ENCODE measurements at regions of chr1 and their contacts with region 1.

Region 1: DNA sequence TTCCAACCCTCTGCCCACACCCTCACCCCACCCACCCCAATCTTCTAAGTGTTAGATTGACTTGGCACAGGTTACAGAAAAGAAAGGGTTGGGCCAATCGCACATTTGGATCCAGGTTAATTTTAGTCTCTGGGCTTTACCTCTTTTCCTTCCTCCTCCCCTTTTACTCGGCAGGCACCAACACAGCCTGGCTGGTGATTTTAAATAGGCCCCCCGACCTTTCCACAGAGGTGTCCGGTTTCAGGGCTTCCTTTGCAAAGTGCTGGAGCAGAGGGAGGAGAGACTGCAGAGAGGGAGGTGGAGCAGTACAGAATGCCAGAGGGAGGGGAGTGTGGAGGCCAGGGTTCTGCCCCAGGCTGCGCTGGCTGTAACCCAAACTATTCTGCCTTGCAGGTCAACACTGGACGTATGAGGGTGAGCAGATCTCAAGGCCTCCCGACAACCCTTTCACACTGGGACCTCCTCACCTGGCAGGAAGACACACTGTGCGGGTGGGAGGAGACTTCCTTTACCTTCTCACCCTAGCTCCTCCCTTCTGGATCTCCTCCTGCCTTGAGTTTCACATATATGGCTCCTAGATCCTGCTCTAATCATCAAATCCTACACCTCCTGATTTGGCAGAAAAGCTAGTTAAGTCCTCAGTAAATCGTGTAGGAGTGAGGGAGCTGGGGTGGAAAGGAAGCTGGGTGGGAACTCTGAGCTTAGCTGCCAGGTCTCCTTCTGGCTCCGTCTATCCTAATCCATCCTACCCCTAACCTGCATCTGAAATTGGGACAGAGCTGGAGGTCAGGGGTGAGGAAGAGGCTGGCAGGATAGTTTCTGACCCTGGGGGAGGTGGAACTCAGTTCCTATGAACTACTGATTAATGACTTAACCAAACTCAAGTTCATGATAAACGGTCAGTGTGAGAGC is 2.4 kb downstream of the CA14 start:
- DNase-seq: no peak
- ATAC-seq: no peak
- H3K4me3 ChIP-seq: no peak overlapping the region
- H3K4me3 Mint-ChIP-seq: no peak overlapping the region
- H3K27ac ChIP-seq: no peak overlapping the region
- H3K27ac Mint-ChIP-seq: no peak overlapping the region
- H3K4me1 ChIP-seq: peaks cover 17% of the 10 kb centered on the region
- H3K4me1 Mint-ChIP-seq: peaks cover 12% of the 10 kb centered on the region
- H3K27me3 ChIP-seq: peaks cover 27 to 28% of the 10 kb centered on the region in 2 experiments
- H3K27me3 Mint-ChIP-seq: peaks cover 40% of the 10 kb centered on the region
- CTCF ChIP-seq: no peak

Region 2: DNA sequence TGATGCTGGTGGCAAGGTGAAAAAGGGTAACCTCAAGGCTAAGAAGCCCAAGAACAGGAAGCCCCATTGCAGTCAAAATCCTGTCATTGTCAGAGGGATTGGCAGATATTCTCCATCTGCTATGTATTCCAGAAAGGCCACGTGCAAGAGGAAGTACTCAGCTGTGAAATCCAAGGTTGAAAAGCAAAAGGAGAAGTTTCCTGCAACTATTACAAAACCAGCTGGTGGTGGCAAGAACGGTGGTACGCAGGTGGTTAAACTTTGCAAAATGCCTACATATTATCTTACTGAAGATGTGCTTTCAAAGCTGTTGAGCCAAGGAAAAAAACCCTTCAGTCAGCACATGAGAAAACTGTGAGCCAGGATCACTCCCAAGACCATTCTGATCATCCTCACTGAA is 206.1 kb before region 1 on chr1:
- CTCF ChIA-PET with region 1: no interaction called
- POLR2A ChIA-PET with region 1: no interaction called
- intact Hi-C with region 1: no loop called
- DNase-seq: peak in 2 of 14 experiments; percentile 24 to 29
- ATAC-seq: no peak
- H3K4me3 ChIP-seq: no peak overlapping the region
- H3K4me3 Mint-ChIP-seq: no peak overlapping the region
- H3K27ac ChIP-seq: no peak overlapping the region
- H3K27ac Mint-ChIP-seq: no peak overlapping the region
- H3K4me1 ChIP-seq: no peaks in the 10 kb centered on the region
- H3K4me1 Mint-ChIP-seq: no peaks in the 10 kb centered on the region
- H3K27me3 ChIP-seq: no peaks in the 10 kb centered on the region
- H3K27me3 Mint-ChIP-seq: no peaks in the 10 kb centered on the region
- CTCF ChIP-seq: no peak

Region 3: DNA sequence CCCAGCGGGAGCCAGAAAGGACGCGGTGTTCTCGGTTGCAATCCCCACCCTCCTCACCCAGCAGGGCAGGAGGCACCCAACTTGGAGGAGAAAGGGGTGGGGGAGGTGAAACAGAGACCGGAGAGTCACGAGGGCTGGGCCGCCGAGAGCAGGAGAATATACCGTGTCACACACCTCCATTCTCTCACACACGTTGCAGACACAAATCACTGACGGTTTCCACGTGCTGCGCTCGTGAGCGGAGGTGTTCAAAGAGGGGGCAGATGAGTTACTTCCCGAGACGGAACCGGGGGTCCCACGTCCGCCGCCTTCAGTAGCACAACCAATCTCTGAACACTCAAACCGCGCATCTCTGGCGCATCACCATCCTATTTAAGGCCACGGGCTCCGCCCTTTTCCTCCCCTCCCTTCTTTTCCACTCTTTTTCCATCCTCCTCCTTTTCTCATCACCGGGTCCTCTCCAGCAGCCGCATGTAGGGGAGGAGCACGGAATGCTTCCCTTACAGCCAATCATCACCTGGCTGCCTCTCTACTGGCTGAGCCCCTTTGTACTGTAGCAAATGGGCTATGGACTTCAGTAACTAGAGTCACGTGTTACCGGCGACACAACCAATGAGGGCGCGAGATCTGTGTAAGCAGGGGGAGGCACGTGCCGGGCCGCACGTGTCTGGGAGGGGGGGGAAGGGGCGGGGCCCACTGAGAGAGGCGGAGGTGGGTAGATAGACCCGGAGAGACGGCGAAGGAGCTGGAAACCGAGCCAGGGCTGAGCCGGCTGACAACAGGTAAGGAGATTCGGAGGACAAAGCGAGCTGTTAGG is 22.0 kb after region 1 on chr1 and contains the start of gene CIART:
- CTCF ChIA-PET with region 1: interaction called, 28 read pairs
- POLR2A ChIA-PET with region 1: interaction called, 14 read pairs
- intact Hi-C with region 1: loop called (anchors 1 kb)
- DNase-seq: peak; percentile 55 to 95 (median 74)
- ATAC-seq: peak; percentile 84
- H3K4me3 ChIP-seq: peak within 1 kb of the TSS; percentile 63
- H3K4me3 Mint-ChIP-seq: peak within 1 kb of the TSS; percentile 82
- H3K27ac ChIP-seq: peak within 1 kb of the TSS; percentile 17 to 49
- H3K27ac Mint-ChIP-seq: peak within 1 kb of the TSS; percentile 87
- H3K4me1 ChIP-seq: peaks cover 24% of the 10 kb centered on the region
- H3K4me1 Mint-ChIP-seq: peaks cover 32% of the 10 kb centered on the region
- H3K27me3 ChIP-seq: no peaks in the 10 kb centered on the region
- H3K27me3 Mint-ChIP-seq: no peaks in the 10 kb centered on the region
- CTCF ChIP-seq: no peak
- total RNA-seq, gene CIART: 4.0 to 4.5 TPM

Region 4: DNA sequence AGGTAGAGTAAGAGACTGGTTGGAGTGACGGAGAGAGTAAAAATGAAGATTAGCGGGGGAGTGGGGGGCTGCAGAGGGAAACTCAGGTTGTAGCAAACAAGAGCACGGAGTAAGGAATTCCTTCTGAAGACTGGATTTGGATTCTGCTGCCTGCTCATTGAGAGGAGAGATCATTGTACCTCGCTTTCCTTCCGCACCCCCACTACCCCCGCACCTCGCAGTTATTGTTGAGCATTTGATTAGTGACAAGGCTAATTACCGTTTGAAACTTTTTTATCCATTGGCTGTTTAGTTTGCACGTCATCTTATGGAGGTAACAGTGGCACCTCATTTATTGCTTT is 61.8 kb after region 1 on chr1:
- CTCF ChIA-PET with region 1: interaction called, 4 read pairs
- POLR2A ChIA-PET with region 1: interaction called, 3 read pairs
- intact Hi-C with region 1: loop called in 1 of 2 experiments (anchors 5 kb)
- DNase-seq: peak in 5 of 14 experiments; percentile 3 to 38 (median 28)
- ATAC-seq: peak; percentile 20
- H3K4me3 ChIP-seq: peak overlapping the region; percentile 78
- H3K4me3 Mint-ChIP-seq: peak overlapping the region; percentile 97
- H3K27ac ChIP-seq: peak overlapping the region; percentile 83 to 84
- H3K27ac Mint-ChIP-seq: peak overlapping the region; percentile 95
- H3K4me1 ChIP-seq: peaks cover 34% of the 10 kb centered on the region
- H3K4me1 Mint-ChIP-seq: peaks cover 39% of the 10 kb centered on the region
- H3K27me3 ChIP-seq: no peaks in the 10 kb centered on the region
- H3K27me3 Mint-ChIP-seq: no peaks in the 10 kb centered on the region
- CTCF ChIP-seq: no peak

Region 5: DNA sequence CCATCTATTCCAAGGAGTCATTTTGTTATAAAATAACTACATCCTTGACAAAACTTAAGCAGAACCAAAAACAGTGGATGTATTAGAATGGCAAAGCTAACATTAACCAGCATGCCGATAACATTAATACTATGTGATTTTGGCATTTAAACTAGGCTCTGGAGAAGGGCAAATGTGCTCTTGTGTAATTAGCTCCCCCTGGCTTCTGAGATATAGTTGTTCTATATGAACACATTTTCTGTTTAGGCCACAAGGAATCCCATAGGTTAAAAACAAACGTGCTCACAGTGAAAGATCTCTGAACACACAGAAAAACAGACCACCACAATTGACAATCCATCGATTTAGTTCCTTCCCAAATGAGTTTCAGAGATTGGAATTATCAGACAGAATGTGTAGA is 169.8 kb after region 1 on chr1:
- CTCF ChIA-PET with region 1: interaction called, 5 read pairs
- POLR2A ChIA-PET with region 1: no interaction called
- intact Hi-C with region 1: loop called (anchors 1 to 5 kb)
- DNase-seq: peak in 3 of 14 experiments; percentile 35 to 39 (median 36)
- ATAC-seq: peak; percentile 52
- H3K4me3 ChIP-seq: no peak overlapping the region
- H3K4me3 Mint-ChIP-seq: no peak overlapping the region
- H3K27ac ChIP-seq: no peak overlapping the region
- H3K27ac Mint-ChIP-seq: peak overlapping the region; percentile 41
- H3K4me1 ChIP-seq: no peaks in the 10 kb centered on the region
- H3K4me1 Mint-ChIP-seq: peaks cover 18% of the 10 kb centered on the region
- H3K27me3 ChIP-seq: no peaks in the 10 kb centered on the region
- H3K27me3 Mint-ChIP-seq: no peaks in the 10 kb centered on the region
- CTCF ChIP-seq: peak; percentile 54

Region 6: DNA sequence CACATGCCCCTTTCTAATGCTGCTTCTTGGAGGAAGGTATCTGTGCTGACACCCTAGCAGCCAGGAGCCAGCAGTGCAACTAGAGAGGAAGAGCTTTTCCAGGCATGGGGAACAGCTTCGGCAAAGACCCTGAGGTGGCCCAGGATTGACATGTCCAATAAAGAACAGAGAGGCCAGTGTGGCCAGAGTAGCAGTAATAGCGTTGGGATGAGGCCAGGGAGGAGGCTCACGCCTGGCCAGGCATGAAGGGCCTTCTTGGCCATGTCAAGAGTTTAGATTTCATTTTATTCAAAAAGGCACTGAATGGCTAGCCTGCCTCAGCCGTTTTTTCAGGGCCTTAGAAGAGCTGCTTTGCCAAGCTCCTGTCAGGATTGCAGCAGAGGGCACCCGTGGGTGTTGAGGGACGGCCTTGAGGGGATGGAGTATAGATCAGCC is 272.9 kb after region 1 on chr1:
- CTCF ChIA-PET with region 1: interaction called, 4 read pairs
- POLR2A ChIA-PET with region 1: no interaction called
- intact Hi-C with region 1: loop called in 1 of 2 experiments (anchors 5 kb)
- DNase-seq: no peak
- ATAC-seq: no peak
- H3K4me3 ChIP-seq: no peak overlapping the region
- H3K4me3 Mint-ChIP-seq: no peak overlapping the region
- H3K27ac ChIP-seq: no peak overlapping the region
- H3K27ac Mint-ChIP-seq: no peak overlapping the region
- H3K4me1 ChIP-seq: no peaks in the 10 kb centered on the region
- H3K4me1 Mint-ChIP-seq: no peaks in the 10 kb centered on the region
- H3K27me3 ChIP-seq: no peaks in the 10 kb centered on the region
- H3K27me3 Mint-ChIP-seq: no peaks in the 10 kb centered on the region
- CTCF ChIP-seq: no peak

Region 7: DNA sequence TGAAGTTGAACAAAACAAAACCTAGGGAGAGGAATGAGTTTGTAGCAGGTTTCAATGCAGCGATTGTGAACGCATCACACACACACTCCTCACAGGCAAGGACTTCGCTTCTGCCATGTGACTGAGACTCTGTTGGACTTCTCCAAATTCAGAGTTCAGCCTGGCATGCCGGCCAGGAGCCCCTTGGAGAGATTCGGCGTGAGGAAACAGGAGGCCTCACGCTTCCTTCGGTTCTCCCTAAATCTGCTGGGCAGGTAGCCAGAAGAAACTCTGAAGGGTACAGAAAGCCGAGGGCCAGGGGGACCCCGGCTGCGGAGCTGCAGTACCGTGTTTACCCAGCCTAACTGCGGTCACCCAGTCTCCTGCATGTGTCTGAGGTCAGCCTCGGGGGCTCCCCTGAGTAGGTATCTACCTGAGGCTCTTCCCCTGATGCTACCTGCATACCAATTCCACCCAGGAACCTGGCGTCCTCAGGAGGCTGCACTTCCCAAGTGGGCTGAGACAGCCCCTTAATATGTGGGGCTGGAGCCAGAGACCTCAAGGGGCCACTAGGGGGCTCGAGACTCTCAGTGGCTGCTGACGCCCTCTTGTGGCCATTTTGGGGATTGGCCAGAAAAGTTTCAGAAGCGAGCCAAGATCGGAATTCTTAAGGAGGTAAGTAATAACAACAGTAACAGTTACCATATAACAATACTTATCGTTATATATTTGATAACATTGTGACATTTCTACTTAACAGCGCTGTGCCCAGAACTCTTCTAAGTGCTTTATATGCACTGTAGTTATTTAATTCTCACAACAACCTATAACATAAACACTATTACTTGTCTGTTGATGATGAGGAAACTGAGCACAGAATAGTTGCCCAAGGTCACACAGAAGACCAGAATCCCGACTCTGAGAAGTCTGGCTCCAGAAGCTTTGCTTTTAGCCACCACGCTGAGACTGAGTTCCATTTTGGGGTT is 719.4 kb after region 1 on chr1:
- CTCF ChIA-PET with region 1: no interaction called
- POLR2A ChIA-PET with region 1: no interaction called
- intact Hi-C with region 1: loop called in 1 of 2 experiments (anchors 10 kb)
- DNase-seq: peak; percentile 81 to 94 (median 88)
- ATAC-seq: peak; percentile 55
- H3K4me3 ChIP-seq: peak overlapping the region; percentile 41
- H3K4me3 Mint-ChIP-seq: peak overlapping the region; percentile 75
- H3K27ac ChIP-seq: no peak overlapping the region
- H3K27ac Mint-ChIP-seq: peak overlapping the region; percentile 59
- H3K4me1 ChIP-seq: peaks cover 45% of the 10 kb centered on the region
- H3K4me1 Mint-ChIP-seq: peaks cover 40% of the 10 kb centered on the region
- H3K27me3 ChIP-seq: no peaks in the 10 kb centered on the region
- H3K27me3 Mint-ChIP-seq: no peaks in the 10 kb centered on the region
- CTCF ChIP-seq: peak; percentile 100

Region 8: GRCh38 chr1:151043163-151043562 is 783.1 kb after region 1 on chr1:
- CTCF ChIA-PET with region 1: no interaction called
- POLR2A ChIA-PET with region 1: no interaction called
- intact Hi-C with region 1: no loop called
- DNase-seq: peak in 2 of 14 experiments; percentile 37 to 40
- ATAC-seq: no peak
- H3K4me3 ChIP-seq: no peak overlapping the region
- H3K4me3 Mint-ChIP-seq: no peak overlapping the region
- H3K27ac ChIP-seq: no peak overlapping the region
- H3K27ac Mint-ChIP-seq: no peak overlapping the region
- H3K4me1 ChIP-seq: peaks cover 26% of the 10 kb centered on the region
- H3K4me1 Mint-ChIP-seq: peaks cover 38% of the 10 kb centered on the region
- H3K27me3 ChIP-seq: no peaks in the 10 kb centered on the region
- H3K27me3 Mint-ChIP-seq: no peaks in the 10 kb centered on the region
- CTCF ChIP-seq: no peak